Activated CD8-positive, alpha-beta T cell treated with anti-CD3 and anti-CD28 coated beads for 36 hours (primary cell): ENCODE measurements at regions of chr17 and their contacts with region 1.

Region 1: GRCh38 chr17:40443583-40444327 is 505 bp downstream of the IGFBP4 start:
- DNase-seq: peak; percentile 76
- ATAC-seq: peak; percentile 77
- H3K4me3 Mint-ChIP-seq: peak overlapping the region; percentile 62
- H3K27ac Mint-ChIP-seq: peak overlapping the region; percentile 83
- H3K4me1 Mint-ChIP-seq: peaks cover 28% of the 10 kb centered on the region
- H3K27me3 Mint-ChIP-seq: peaks cover 5% of the 10 kb centered on the region
- CTCF ChIP-seq: peak; percentile 70

Region 2: DNA sequence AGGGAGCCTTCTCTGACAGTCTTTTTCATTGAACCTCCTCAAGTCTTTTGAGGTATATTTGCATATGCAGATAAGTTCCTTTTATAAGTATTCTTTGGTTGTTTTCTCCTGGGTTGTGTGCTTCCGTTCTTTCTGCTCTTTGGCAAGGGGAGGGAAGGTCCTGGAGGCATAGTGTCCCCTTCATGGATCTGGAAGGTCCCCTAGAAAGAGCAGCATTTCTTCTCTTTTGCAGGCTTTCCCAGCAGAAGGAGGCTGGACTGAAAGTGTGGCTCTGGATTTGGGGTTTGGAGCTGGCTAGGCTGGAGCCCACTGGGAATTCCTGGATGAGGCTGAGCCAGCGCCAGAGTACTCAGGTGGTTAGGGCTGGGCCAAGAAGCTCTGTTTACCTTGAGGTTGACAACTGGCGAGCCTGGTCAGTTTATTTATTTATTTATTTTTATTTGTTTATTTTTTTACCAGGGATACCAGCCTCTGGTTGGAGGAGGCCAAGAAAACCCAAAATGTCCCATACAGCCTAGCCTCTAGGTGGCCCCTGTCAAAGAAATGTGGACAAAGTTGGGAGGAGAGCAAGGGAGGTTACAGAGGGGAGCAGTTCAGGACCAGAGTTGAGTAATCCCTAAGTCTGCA is 20.7 kb before region 1 on chr17:
- CTCF ChIA-PET with region 1: interaction called, 18 read pairs
- POLR2A ChIA-PET with region 1: interaction called, 9 read pairs
- intact Hi-C with region 1: no loop called
- DNase-seq: no peak
- ATAC-seq: no peak
- H3K4me3 Mint-ChIP-seq: no peak overlapping the region
- H3K27ac Mint-ChIP-seq: no peak overlapping the region
- H3K4me1 Mint-ChIP-seq: peaks cover 37% of the 10 kb centered on the region
- H3K27me3 Mint-ChIP-seq: no peaks in the 10 kb centered on the region
- CTCF ChIP-seq: no peak

Region 3: DNA sequence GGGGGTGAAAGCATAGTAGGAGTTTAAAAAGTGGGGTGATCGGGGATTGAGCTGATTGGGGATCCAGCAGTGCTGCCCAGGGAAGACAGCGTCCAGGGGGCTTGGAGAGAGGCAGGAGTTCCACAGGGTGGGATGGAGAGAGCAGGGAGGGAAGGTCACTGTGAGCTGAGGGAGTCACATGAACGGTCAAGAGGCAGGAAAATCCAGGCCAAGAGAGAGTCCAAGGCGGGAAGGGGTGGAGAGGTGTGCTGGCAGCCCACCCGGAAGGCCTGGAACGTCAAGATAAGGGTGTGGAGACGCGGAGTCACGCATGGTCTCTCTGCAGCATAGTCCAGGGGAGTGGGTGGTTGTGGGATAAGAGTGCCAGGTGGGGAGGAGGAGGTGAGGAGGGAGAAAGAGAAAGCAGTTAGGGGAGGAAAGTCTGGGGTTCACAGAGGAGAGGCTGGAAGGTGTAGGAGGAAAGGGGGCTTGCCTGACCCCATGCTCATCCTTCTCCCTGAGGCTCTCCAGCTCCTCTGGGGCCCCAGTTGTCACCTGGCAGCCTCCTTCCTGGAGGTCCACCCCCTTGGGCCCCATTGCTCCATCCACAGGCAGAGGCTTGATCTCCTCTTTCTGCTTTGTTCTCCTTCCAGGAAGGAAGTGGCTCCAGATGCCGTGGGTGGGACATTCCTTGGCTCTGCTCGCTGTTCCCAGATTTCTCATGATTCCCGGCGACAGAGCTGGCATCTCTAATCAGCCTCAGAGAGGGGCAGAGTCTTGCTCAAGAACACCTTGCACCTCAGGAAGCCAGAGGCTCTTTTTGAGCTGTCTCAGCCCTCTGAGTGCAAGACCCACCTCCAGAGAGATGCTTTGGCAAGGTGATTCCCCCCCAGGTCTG is 92.8 kb after region 1 on chr17:
- CTCF ChIA-PET with region 1: interaction called, 97 read pairs
- POLR2A ChIA-PET with region 1: interaction called, 7 read pairs
- intact Hi-C with region 1: loop called (anchors 5 kb)
- DNase-seq: peak; percentile 17
- ATAC-seq: no peak
- H3K4me3 Mint-ChIP-seq: no peak overlapping the region
- H3K27ac Mint-ChIP-seq: peak overlapping the region; percentile 50
- H3K4me1 Mint-ChIP-seq: peaks cover 93% of the 10 kb centered on the region
- H3K27me3 Mint-ChIP-seq: no peaks in the 10 kb centered on the region
- CTCF ChIP-seq: no peak